Endothelial cell of umbilical vein (primary cell): ENCODE measurements at regions of chr2 and their contacts with region 1.

Region 1: DNA sequence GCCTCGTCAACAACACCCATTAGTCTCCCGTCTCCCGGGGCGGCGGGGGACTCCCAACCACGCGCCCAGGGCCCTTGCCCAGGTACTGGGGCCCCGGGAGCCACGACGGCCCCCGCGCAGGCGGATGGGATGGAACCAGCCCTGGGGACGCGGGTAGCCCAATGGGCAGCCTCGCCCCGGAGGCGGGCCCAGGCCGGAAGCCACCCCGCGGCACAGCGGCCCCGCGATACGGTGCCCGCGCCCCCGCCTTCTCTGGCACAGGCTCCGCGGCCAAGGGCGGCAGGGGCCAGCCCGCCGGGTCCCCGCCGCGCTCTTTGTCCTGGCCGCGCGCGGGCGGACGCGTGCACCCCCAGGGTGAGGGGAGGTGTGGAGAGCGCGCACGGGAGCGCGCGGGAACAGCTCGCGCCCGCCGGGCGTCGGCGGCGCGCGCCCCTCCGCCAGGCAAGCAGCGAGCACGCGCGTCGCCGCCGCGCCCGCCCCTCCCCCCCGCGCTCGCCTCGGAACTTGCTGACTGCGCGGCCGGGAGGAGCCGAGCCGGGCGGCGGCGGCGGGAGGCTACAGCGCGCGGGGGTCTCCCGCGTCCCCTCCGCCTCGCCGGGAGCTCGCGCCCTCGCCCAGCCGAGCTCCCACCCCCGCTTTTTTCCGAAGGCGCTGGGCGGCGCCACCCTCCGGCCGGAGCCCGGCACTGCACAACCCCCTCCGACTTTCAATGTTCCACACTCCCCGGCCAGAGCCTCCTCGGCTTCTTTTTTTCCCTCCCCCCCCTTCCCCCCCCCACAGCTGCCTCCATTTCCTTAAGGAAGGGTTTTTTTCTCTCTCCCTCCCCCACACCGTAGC is at the start of gene UBE2E3:
- DNase-seq: peak; percentile 80
- H3K4me3 ChIP-seq: peak within 1 kb of the TSS; percentile 82 to 98 (median 96)
- H3K27ac ChIP-seq: peak within 1 kb of the TSS; percentile 82
- H3K4me1 ChIP-seq: peaks cover 39% of the 10 kb centered on the region
- H3K27me3 ChIP-seq: no peaks in the 10 kb centered on the region
- CTCF ChIP-seq: peak; percentile 52 to 80
- POLR2A ChIP-seq: peak; percentile 77
- total RNA-seq, gene UBE2E3: 81.5 and 89.2 TPM in 2 replicates

Region 2: GRCh38 chr2:180125245-180125962 is 854.9 kb before region 1 on chr2:
- CTCF ChIA-PET with region 1: interaction called, 57 read pairs
- POLR2A ChIA-PET with region 1: no interaction called
- dilution Hi-C with region 1: no loop called
- intact Hi-C with region 1: loop called (anchors 1 kb)
- DNase-seq: peak; percentile 80
- H3K4me3 ChIP-seq: no peak overlapping the region
- H3K27ac ChIP-seq: no peak overlapping the region
- H3K4me1 ChIP-seq: no peaks in the 10 kb centered on the region
- H3K27me3 ChIP-seq: peaks cover 4 to 12% of the 10 kb centered on the region in 2 experiments
- CTCF ChIP-seq: peak; percentile 38 to 55
- POLR2A ChIP-seq: no peak

Region 3: GRCh38 chr2:180905002-180905401 is 75.3 kb before region 1 on chr2:
- CTCF ChIA-PET with region 1: no interaction called
- POLR2A ChIA-PET with region 1: interaction called, 10 read pairs
- dilution Hi-C with region 1: no loop called
- intact Hi-C with region 1: no loop called
- DNase-seq: no peak
- H3K4me3 ChIP-seq: no peak overlapping the region
- H3K27ac ChIP-seq: no peak overlapping the region
- H3K4me1 ChIP-seq: no peaks in the 10 kb centered on the region
- H3K27me3 ChIP-seq: no peaks in the 10 kb centered on the region
- CTCF ChIP-seq: no peak
- POLR2A ChIP-seq: no peak

Region 4: DNA sequence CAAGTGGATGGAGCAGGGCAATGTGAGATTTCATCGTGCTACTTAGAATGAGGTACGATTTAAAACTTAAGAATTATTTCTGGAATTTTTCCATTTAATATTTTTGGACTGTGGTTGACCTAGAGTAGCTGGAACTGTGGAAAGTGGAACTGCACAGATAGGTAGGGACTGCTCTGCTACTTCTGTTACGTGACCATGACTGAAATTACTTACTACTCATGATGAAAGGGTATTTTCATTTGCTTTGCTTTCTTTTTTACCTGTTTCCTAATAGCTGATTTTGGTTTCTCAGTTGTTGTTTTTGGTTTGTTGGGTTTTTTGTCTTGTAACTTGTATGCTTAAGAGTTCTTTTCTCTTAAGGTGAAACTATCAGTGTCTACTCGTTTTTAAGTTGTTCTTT is 11.5 kb after region 1 on chr2:
- CTCF ChIA-PET with region 1: interaction called, 33 read pairs
- POLR2A ChIA-PET with region 1: no interaction called
- dilution Hi-C with region 1: no loop called
- intact Hi-C with region 1: no loop called
- DNase-seq: no peak
- H3K4me3 ChIP-seq: no peak overlapping the region
- H3K27ac ChIP-seq: no peak overlapping the region
- H3K4me1 ChIP-seq: peaks cover 5% of the 10 kb centered on the region
- H3K27me3 ChIP-seq: no peaks in the 10 kb centered on the region
- CTCF ChIP-seq: no peak
- POLR2A ChIP-seq: no peak

Region 5: DNA sequence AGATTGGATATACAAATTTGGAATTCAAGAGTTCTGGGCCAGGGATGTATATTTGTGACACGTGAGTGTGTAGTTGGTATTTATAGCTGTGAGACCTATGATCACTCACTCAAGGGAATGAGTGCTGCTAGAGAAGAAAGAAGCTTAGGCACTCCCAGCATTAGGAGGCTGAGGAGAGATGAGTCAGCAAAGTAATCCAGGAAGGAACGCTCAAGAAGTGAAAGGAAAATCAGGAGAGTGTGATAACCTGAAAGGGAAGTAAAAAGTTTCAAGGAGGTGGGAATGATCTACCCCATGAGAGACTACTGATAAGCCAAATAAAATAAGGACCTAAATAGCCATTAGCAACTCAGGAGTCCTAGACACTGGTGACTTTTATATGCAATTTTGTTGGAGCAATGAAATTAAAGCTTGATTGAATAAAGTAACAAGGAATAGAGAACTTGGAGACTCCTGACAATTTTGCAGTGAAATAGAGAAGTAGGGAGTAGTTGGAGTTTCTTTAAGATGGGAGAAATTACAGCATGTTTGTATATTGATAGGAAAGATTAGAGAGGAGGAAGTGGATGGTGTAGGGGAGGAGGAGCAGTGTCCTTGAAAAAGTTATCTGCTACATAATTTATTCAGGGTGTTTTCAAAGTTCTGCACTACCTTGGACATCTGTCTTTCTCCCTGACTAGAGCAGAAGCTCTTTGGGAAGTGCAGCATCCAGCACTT is 90.0 kb after region 1 on chr2:
- CTCF ChIA-PET with region 1: interaction called, 12 read pairs
- POLR2A ChIA-PET with region 1: interaction called, 4 read pairs
- dilution Hi-C with region 1: no loop called
- intact Hi-C with region 1: loop called (anchors 2 kb)
- DNase-seq: peak; percentile 73
- H3K4me3 ChIP-seq: no peak overlapping the region
- H3K27ac ChIP-seq: no peak overlapping the region
- H3K4me1 ChIP-seq: peaks cover 47% of the 10 kb centered on the region
- H3K27me3 ChIP-seq: no peaks in the 10 kb centered on the region
- CTCF ChIP-seq: no peak
- POLR2A ChIP-seq: no peak

Region 6: DNA sequence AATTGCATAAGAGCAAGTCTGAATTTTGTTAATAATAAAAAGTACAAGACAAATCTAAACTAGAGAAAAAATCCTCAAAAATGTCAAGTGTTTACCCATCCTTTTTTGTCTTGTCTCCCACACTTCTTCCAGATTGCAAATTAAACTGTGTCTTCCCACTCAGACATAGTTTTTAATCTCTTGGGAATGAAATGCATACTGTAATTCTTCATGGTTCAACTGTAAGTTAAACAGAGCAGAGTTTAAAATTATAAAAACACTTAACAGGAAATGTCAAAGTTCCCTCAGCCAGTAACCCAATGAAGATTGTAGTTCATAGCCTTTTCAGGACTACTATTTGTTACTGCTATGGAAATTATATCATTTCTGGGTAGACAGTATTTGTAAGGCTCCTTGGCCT is 171.9 kb after region 1 on chr2:
- CTCF ChIA-PET with region 1: no interaction called
- POLR2A ChIA-PET with region 1: no interaction called
- dilution Hi-C with region 1: no loop called
- intact Hi-C with region 1: no loop called
- DNase-seq: no peak
- H3K4me3 ChIP-seq: no peak overlapping the region
- H3K27ac ChIP-seq: no peak overlapping the region
- H3K4me1 ChIP-seq: no peaks in the 10 kb centered on the region
- H3K27me3 ChIP-seq: peaks cover 0 to 5% of the 10 kb centered on the region in 2 experiments
- CTCF ChIP-seq: no peak
- POLR2A ChIP-seq: no peak